ENCODE measurements at regions of chr22 and their contacts with region 1.

Region 1: GRCh38 chr22:36028646-36029405 is at the start of gene RBFOX2:
- DNase-seq: peak; percentile 97
- H3K4me3 ChIP-seq: peak within 1 kb of the TSS; percentile 83 to 90
- H3K27ac ChIP-seq: peak within 1 kb of the TSS; percentile 89 to 92
- H3K4me1 ChIP-seq: no peaks in the 10 kb centered on the region
- H3K27me3 ChIP-seq: no peaks in the 10 kb centered on the region
- CTCF ChIP-seq: no peak
- POLR2A ChIP-seq: peak; percentile 55
- total RNA-seq, gene RBFOX2: 59.8 to 79.4 TPM

Region 2: DNA sequence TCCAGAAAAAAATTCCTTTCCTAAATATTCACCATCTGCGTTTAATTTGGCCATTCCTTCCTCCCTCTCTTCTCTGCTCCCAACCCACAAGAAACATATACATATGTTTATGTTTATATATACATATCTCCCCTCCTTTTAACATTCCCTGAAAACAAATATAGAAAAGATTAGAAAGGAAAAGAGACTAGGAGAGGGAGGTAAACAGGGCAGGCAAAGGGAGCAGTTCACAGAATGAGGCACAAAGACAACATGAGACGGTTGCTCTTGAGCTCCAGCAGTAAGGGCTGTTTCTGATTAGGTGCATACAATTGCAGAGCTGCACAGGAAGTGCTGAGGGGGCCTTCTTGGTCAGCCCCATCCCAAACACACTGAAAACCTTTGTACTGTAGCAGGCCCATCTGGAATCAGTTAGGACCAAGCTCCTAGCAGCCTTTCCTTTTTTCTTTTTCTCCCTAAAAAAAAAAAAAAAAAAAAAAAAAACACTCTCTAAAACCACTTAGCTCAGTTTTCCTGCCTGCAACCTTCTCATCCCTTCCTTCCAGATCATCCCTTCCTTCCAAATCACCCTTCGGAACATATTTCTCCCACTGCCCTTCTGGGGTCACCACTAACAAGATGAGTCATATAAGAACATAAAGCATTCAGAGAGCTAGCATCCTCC is 57.2 kb before region 1 on chr22:
- intact Hi-C with region 1: loop called (anchors 5 kb)
- DNase-seq: no peak
- H3K4me3 ChIP-seq: no peak overlapping the region
- H3K27ac ChIP-seq: peak overlapping the region; percentile 48 to 78
- H3K4me1 ChIP-seq: peaks cover 26% of the 10 kb centered on the region
- H3K27me3 ChIP-seq: no peaks in the 10 kb centered on the region
- CTCF ChIP-seq: no peak
- POLR2A ChIP-seq: no peak

Region 3: GRCh38 chr22:36017651-36018091 is 11.2 kb before region 1 on chr22:
- intact Hi-C with region 1: no loop called
- DNase-seq: no peak
- H3K4me3 ChIP-seq: no peak overlapping the region
- H3K27ac ChIP-seq: no peak overlapping the region
- H3K4me1 ChIP-seq: no peaks in the 10 kb centered on the region
- H3K27me3 ChIP-seq: no peaks in the 10 kb centered on the region
- CTCF ChIP-seq: no peak
- POLR2A ChIP-seq: no peak

Region 4: DNA sequence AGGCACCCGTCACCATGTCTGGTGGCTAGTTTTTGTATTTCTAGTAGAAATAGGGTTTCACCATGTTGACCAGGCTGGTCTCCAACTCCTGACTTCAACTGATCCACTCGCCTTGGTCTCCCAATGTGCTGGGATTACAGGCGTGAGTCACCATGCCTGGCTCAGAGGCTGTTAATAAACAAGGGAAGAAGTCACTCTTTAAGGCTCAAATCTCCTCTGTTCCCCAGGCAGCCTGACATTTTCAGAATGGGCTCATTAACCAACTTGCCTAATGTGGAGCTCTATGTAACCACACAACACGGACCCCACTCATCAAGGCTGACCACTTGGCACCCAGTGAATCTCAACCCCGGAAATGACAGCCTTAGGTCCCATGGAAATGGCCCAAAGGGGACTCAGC is 107.6 kb after region 1 on chr22:
- intact Hi-C with region 1: no loop called
- DNase-seq: no peak
- H3K4me3 ChIP-seq: no peak overlapping the region
- H3K27ac ChIP-seq: no peak overlapping the region
- H3K4me1 ChIP-seq: no peaks in the 10 kb centered on the region
- H3K27me3 ChIP-seq: no peaks in the 10 kb centered on the region
- CTCF ChIP-seq: no peak
- POLR2A ChIP-seq: no peak

Measured in prostate gland (tissue), 2 donors.